ENCODE measurements at regions of chr10 and their contacts with region 1.

Region 1: DNA sequence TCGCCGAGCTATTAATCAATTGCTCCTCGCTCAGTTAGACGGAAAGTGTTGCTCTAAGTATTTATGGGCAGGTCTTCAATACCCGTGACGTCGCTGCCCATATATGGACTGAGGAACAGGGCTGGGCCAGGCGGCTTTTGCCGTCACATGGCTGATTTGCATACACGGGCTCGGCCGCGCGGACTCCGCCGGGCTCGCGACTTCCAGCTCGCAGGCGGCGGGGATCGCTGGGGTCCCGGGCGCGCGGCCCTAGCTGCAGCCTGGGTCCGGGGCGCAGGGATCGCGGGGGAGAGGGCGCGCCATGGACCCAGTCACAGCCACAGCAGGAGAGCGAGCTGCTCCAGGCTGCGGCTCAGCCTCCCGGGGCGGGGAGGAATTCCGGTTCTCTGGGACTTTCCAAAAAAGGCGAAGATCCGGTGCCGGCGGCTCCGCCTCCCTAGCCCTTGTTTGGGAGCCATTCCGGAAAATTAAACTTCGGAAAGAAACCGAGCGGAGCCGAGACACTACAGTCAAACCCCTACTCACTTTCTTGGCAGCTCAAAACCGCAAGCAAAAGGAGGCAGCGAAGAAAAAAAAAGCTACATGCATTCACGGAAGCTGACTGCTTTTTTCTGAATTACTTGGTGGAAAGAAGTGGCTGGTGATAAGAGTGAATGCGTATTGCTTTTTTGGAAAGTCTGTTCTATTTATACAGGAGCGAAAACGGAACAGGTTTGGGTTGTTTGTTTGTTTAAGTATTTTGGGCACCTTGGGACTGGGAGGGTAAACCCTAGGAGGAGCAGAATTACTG is at the start of gene EGR2:
- DNase-seq: peak; percentile 97
- H3K4me3 ChIP-seq: peak within 1 kb of the TSS; percentile 62
- H3K27ac ChIP-seq: peak within 1 kb of the TSS; percentile 95
- H3K4me1 ChIP-seq: peaks cover 7% of the 10 kb centered on the region
- H3K27me3 ChIP-seq: peaks cover 5% of the 10 kb centered on the region
- CTCF ChIP-seq: no peak
- total RNA-seq, gene EGR2: 14.5 and 18.3 TPM in 2 replicates

Region 2: DNA sequence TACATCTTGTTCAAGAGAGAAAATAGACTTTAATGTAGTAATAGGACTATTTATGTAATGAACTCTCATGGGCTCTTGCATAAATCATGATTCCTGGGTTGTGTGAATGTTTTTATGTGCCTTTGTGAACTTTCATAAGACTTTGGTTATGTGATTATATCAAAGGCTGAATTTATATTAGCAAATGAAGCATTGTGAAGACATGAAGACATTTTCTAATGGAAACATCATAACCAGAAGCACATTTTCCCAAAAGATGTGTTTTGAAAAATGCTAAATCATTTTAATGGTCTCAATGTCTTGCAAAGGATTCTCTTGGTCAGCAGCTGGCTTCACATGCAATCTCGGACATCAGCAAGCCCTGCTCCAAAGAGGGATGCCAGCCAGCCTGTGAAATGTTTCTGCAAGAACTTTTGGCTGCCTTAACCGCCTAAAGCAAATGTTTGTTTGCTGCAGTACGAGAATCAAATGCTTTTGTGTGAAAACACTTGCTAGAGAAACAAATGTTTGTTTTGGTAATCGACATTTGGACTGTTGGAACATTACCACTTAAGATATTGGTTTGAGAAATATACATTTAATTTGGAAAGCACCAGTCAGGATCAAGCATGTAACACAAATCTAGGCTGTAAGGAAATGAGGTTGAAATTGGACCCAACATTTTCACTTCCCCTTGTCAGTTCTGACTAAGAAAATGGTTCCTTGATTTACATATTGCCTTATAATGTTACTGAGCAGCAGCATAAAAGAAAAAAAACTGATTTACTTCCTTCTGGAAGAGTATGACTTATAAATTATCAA is 650.0 kb before region 1 on chr10:
- CTCF ChIA-PET with region 1: no interaction called
- POLR2A ChIA-PET with region 1: no interaction called
- intact Hi-C with region 1: no loop called
- DNase-seq: peak; percentile 16
- H3K4me3 ChIP-seq: no peak overlapping the region
- H3K27ac ChIP-seq: peak overlapping the region; percentile 17
- H3K4me1 ChIP-seq: peaks cover 25% of the 10 kb centered on the region
- H3K27me3 ChIP-seq: no peaks in the 10 kb centered on the region
- CTCF ChIP-seq: no peak

Region 3: GRCh38 chr10:62268399-62269114 is 548.0 kb before region 1 on chr10 and contains the start of gene RTKN2:
- CTCF ChIA-PET with region 1: no interaction called
- POLR2A ChIA-PET with region 1: no interaction called
- intact Hi-C with region 1: loop called (anchors 10 kb)
- DNase-seq: peak; percentile 95
- H3K4me3 ChIP-seq: peak within 1 kb of the TSS; percentile 91
- H3K27ac ChIP-seq: peak within 1 kb of the TSS; percentile 73
- H3K4me1 ChIP-seq: peaks cover 37% of the 10 kb centered on the region
- H3K27me3 ChIP-seq: no peaks in the 10 kb centered on the region
- CTCF ChIP-seq: no peak
- total RNA-seq, gene RTKN2: 21.9 and 22.3 TPM in 2 replicates

Region 4: GRCh38 chr10:62594093-62594520 is 222.4 kb before region 1 on chr10:
- CTCF ChIA-PET with region 1: interaction called, 3 read pairs
- POLR2A ChIA-PET with region 1: no interaction called
- intact Hi-C with region 1: loop called (anchors 5 kb)
- DNase-seq: peak; percentile 81
- H3K4me3 ChIP-seq: no peak overlapping the region
- H3K27ac ChIP-seq: no peak overlapping the region
- H3K4me1 ChIP-seq: peaks cover 6% of the 10 kb centered on the region
- H3K27me3 ChIP-seq: no peaks in the 10 kb centered on the region
- CTCF ChIP-seq: peak; percentile 97

Region 5: GRCh38 chr10:62631241-62631640 is 185.3 kb before region 1 on chr10:
- CTCF ChIA-PET with region 1: interaction called, 10 read pairs
- POLR2A ChIA-PET with region 1: no interaction called
- intact Hi-C with region 1: no loop called
- DNase-seq: no peak
- H3K4me3 ChIP-seq: no peak overlapping the region
- H3K27ac ChIP-seq: no peak overlapping the region
- H3K4me1 ChIP-seq: no peaks in the 10 kb centered on the region
- H3K27me3 ChIP-seq: no peaks in the 10 kb centered on the region
- CTCF ChIP-seq: no peak

Region 6: GRCh38 chr10:62851442-62851841 is 34.9 kb after region 1 on chr10:
- CTCF ChIA-PET with region 1: no interaction called
- POLR2A ChIA-PET with region 1: interaction called, 16 read pairs
- intact Hi-C with region 1: no loop called
- DNase-seq: peak; percentile 46
- H3K4me3 ChIP-seq: no peak overlapping the region
- H3K27ac ChIP-seq: no peak overlapping the region
- H3K4me1 ChIP-seq: no peaks in the 10 kb centered on the region
- H3K27me3 ChIP-seq: no peaks in the 10 kb centered on the region
- CTCF ChIP-seq: peak; percentile 55

Region 7: DNA sequence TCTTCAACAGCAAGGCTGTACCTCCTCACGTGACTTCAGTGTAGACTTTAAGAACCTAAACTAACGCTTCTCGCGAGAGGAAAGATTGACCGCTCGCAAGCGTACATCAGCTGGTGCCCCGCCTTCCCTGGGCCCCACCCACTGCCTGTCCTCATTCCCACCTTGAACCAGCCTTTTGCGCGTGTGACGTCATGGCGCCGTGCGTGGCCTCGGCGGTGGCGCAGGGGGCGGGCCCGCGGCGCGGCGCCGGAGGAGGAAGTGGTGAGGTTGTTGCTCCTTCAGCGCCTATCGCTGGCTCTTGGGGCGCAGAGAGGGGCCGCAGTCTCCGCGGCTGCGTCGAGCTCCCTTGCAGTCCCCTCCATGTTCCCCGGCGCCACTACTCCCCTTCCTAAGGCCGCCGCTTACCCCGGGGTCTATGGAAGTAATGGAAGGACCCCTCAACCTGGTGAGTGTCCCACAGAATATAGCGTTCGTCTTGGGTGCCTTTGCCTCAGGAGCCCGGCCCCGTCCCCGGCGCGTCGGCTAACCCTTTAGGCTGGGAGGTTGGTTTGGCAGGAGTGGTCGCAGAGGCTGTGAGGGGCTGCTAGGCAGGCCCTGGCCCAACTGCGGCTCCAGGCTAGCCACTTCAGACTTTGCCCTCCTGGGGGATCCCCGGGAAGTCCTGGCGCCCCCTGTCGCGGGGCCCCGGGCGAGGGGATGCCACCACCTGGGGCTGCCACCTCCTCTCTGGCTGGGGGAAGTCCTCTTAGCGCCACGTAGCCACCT is 316.7 kb after region 1 on chr10 and contains the start of gene NRBF2:
- CTCF ChIA-PET with region 1: no interaction called
- POLR2A ChIA-PET with region 1: no interaction called
- intact Hi-C with region 1: loop called (anchors 2 kb)
- DNase-seq: peak; percentile 99
- H3K4me3 ChIP-seq: peak within 1 kb of the TSS; percentile 85
- H3K27ac ChIP-seq: peak within 1 kb of the TSS; percentile 87
- H3K4me1 ChIP-seq: no peaks in the 10 kb centered on the region
- H3K27me3 ChIP-seq: no peaks in the 10 kb centered on the region
- CTCF ChIP-seq: peak; percentile 39; the same call in 1 of the 2 replicates
- total RNA-seq, gene NRBF2: 21.9 and 24.8 TPM in 2 replicates

Measured in A673 (cell line).